ENCODE measurements at regions of chr7 and their contacts with region 1.

Region 1: GRCh38 chr7:116588641-116589594 is 64.1 kb downstream of the CAV1 start:
- DNase-seq: no peak
- ATAC-seq: peak; percentile 25
- H3K4me3 Mint-ChIP-seq: no peak overlapping the region
- H3K27ac Mint-ChIP-seq: no peak overlapping the region
- H3K4me1 Mint-ChIP-seq: peaks cover 23% of the 10 kb centered on the region
- H3K27me3 Mint-ChIP-seq: peaks cover 13% of the 10 kb centered on the region
- CTCF ChIP-seq: no peak

Region 2: DNA sequence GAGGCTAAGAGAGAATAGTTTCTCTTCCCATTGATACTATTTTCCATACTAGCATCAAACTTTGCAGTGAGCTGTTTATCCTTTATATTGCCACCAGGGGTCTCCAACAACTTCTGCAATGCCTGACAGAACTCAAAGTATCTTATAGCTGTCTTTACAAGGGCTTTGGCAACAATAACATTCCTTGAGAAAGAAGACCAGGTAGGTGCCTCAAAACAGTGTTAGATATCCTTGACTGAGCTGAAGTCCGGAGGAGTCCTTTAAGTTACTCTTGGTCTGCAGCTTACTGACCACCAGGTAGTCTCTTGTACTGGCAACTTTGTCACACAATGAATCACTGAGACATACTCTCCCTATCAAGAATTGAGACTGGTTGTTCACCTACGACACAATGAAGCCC is 408.6 kb before region 1 on chr7:
- CTCF ChIA-PET with region 1: interaction called, 29 read pairs
- POLR2A ChIA-PET with region 1: no interaction called
- intact Hi-C with region 1: loop called (anchors 1 kb)
- DNase-seq: no peak
- ATAC-seq: peak; percentile 81
- H3K4me3 Mint-ChIP-seq: no peak overlapping the region
- H3K27ac Mint-ChIP-seq: no peak overlapping the region
- H3K4me1 Mint-ChIP-seq: no peaks in the 10 kb centered on the region
- H3K27me3 Mint-ChIP-seq: peaks cover 2% of the 10 kb centered on the region
- CTCF ChIP-seq: no peak

Region 3: DNA sequence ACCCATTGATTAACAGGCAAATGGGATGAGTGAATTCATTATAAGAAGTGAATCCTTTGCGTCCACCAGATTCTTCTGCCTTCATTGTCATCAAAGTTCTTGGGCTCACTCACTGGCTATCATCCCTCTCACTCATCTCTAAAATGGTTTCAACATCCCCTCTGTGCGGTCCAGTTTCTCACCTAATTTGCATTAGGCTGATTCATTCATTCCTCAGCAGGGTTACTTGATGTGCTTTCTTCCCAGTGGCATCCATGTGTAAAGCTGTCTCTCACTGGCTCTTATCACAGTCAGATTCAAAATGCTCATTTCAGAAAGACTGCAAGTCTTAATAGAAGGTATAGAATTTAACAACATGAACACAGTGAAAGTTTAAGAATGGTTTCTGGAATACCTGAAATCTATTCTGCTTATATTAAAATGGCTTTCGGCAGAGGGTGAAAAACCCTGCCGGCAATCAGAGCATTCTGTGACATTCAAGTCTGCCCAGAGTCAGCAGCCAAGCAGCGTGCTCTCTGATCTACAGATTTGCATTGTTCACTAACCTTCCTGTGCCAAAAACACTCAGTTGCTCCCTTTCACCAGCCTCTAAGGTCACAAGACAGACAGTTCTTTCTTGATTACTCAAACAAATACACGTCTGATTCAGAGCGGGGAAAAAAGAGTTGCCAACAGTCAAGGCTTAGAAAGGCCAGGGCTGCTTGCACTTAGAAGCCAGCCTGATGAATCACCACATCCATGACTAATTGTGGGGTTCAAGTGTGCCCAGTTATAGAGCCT is 271.9 kb before region 1 on chr7:
- CTCF ChIA-PET with region 1: no interaction called
- POLR2A ChIA-PET with region 1: no interaction called
- intact Hi-C with region 1: loop called (anchors 5 kb)
- DNase-seq: no peak
- ATAC-seq: peak; percentile 74
- H3K4me3 Mint-ChIP-seq: peak overlapping the region; percentile 42
- H3K27ac Mint-ChIP-seq: peak overlapping the region; percentile 80
- H3K4me1 Mint-ChIP-seq: peaks cover 24% of the 10 kb centered on the region
- H3K27me3 Mint-ChIP-seq: peaks cover 5% of the 10 kb centered on the region
- CTCF ChIP-seq: no peak

Region 4: GRCh38 chr7:116630932-116631745 is 42.2 kb after region 1 on chr7:
- CTCF ChIA-PET with region 1: interaction called, 5 read pairs
- POLR2A ChIA-PET with region 1: no interaction called
- intact Hi-C with region 1: loop called (anchors 2 kb)
- DNase-seq: peak; percentile 36
- ATAC-seq: peak; percentile 84
- H3K4me3 Mint-ChIP-seq: peak overlapping the region; percentile 74
- H3K27ac Mint-ChIP-seq: peak overlapping the region; percentile 70
- H3K4me1 Mint-ChIP-seq: peaks cover 26% of the 10 kb centered on the region
- H3K27me3 Mint-ChIP-seq: peaks cover 6% of the 10 kb centered on the region
- CTCF ChIP-seq: no peak

Region 5: DNA sequence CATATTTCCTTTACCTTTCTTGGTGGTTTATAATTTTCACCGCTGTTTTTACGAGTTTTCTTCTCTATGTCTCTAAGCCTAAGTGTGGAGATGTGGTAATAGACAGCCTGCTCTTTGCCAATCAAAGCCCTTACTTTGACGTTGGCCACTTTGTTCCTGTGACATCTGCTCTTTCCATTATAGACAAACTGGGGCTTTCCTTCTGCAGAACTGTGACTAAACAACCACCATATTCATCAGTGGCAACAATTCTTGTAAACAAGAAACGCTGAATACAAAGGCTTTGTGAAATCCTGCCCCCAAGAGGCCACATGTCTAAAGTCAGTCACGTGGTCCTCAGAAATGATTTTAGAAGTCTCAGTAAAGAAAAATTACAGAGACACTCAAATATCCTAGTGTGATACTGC is 213.8 kb after region 1 on chr7:
- CTCF ChIA-PET with region 1: interaction called, 47 read pairs
- POLR2A ChIA-PET with region 1: no interaction called
- intact Hi-C with region 1: no loop called
- DNase-seq: no peak
- ATAC-seq: peak; percentile 31
- H3K4me3 Mint-ChIP-seq: no peak overlapping the region
- H3K27ac Mint-ChIP-seq: no peak overlapping the region
- H3K4me1 Mint-ChIP-seq: peaks cover 9% of the 10 kb centered on the region
- H3K27me3 Mint-ChIP-seq: peaks cover 15% of the 10 kb centered on the region
- CTCF ChIP-seq: no peak